ENCODE measurements at regions of chrX and their contacts with region 1.

Region 1: DNA sequence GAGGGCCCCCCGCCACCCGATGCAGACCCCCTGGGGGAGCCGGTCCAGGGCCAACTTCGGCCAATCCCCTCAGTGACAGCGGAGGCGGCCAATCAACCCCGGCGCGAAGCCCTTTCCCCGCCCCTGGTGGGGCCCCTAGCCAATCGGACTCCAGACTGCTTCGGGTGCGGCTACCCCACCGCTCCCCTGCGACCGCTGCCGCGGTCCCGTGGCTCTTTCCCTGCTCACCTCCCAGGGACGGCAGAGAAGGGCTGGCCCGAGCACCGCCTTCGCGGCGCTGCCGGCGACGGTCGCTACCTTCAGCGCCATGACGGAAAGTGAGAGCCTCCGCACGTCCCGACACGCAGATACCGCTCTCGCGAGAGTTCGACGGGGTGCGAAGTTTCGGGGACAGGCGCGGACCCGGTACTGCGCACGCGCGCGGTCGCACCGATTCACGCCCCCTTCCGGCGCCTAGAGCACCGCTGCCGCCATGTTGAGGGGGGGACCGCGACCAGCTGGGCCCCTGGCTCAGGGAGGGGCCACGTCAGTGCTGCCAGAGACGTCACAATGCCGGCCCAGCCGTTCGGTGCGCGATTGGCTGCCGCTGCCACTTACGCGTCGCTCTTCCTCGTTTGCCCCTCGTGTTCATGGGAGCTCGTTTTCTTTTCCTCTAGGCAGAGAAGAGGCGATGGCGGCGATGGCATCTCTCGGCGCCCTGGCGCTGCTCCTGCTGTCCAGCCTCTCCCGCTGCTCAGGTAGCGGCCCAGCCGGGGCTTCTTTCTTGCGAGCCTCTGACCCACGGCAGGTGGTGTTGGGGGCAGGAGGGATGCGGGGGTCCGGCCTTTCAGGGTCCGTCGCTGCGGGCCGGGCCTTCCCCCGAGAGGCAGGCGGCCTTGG is at the starts of genes IDH3G and SSR4:
- DNase-seq: peak; percentile 99

Region 2: GRCh38 chrX:153806999-153807575 is 12.8 kb after region 1 on chrX:
- CTCF ChIA-PET with region 1: no interaction called
- POLR2A ChIA-PET with region 1: interaction called, 11 read pairs
- DNase-seq: no peak